ENCODE measurements at regions of chr1 and their contacts with region 1.

Region 1: DNA sequence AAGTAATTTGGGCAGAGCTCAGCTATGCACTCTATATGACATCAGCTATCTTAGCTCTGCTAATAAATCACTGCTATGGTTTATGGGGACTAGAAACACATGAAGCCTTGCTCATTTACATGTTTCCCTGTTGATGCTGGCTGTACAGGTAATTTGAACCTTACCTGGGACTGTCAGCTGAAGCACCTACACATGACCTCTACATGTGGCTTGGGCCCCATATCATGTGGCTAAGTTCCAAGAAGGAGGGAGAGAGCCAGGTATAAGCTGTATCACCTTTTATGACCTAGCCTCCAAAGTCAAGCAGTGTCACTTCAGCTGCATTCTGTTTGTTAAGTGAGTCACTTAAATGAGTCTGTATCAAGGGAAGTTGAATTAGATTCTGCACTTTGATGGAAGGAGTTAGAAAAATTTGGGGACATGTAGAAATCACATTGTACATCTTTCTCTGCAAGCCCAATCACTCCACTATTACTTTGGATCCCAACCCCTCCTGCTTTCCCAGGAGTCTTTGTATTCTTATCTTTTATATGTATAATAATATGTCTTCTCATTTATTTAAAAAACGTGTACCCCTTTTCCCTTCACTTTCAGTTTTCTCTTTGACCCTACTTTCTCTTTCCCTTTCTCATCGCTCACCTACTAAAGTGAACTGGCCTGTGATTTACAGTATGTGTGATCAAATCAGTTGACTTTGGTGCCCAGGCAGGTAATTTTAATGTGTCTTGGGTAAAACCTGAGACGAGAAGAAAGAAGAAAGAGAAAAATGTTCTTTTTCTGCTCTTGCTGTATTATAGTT is 53.4 kb upstream of the PRKACB start:
- DNase-seq: peak; percentile 10
- H3K4me3 Mint-ChIP-seq: peak overlapping the region; percentile 58
- H3K27ac Mint-ChIP-seq: peak overlapping the region; percentile 3
- H3K4me1 Mint-ChIP-seq: peaks cover 33% of the 10 kb centered on the region
- H3K27me3 Mint-ChIP-seq: no peaks in the 10 kb centered on the region

Region 2: GRCh38 chr1:84107955-84108354 is 17.3 kb after region 1 on chr1:
- CTCF ChIA-PET with region 1: no interaction called
- intact Hi-C with region 1: loop called (anchors 2 kb)
- DNase-seq: no peak
- H3K4me3 Mint-ChIP-seq: no peak overlapping the region
- H3K27ac Mint-ChIP-seq: no peak overlapping the region
- H3K4me1 Mint-ChIP-seq: peaks cover 4% of the 10 kb centered on the region
- H3K27me3 Mint-ChIP-seq: no peaks in the 10 kb centered on the region